Activated CD4-positive, alpha-beta memory T cell treated with anti-CD3 and anti-CD28 coated beads, Interleukin-2, amount 10 ng/mL, durations not matched to agents 7 days and 5 days (primary cell): ENCODE measurements at regions of chr2 and their contacts with region 1.

Region 1: DNA sequence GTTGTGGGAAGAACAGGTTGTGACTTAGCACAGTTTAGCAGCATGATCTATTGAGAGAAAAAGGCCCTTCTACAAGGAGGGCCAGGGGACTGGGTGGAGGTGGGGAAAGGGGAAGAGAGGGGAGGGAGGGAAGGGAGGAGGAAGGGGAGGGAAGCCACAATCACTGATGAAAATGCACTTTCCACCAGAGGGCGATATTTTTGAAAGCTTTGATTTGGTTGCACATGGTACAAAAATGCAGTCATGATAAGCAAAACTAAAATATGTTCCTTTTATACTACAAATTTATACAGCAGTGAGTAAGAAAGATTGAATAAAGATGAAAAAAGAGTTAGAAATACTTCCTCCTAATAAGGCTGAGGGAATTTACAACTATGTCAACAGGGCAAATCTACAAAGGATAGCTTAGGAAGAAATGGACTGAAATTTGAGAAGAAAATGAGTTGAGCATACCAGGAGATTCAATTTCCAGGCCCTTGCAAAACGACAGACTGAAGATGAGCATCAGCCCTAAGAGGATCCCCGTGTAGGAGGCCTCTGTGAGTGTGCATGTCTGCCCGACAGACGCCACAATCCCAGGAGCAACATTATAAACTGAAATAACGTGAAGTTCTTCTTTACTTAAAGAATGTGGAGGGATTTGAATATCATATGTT is 17.2 kb downstream of the SH3YL1 start:
- DNase-seq: no peak
- H3K4me3 Mint-ChIP-seq: no peak overlapping the region
- H3K27ac Mint-ChIP-seq: no peak overlapping the region
- H3K4me1 Mint-ChIP-seq: peaks cover 3% of the 10 kb centered on the region
- H3K27me3 Mint-ChIP-seq: no peaks in the 10 kb centered on the region

Region 2: GRCh38 chr2:636641-637405 is 390.2 kb after region 1 on chr2:
- CTCF ChIA-PET with region 1: interaction called, 23 read pairs
- POLR2A ChIA-PET with region 1: no interaction called
- DNase-seq: peak; percentile 46
- H3K4me3 Mint-ChIP-seq: peak overlapping the region; percentile 69
- H3K27ac Mint-ChIP-seq: no peak overlapping the region
- H3K4me1 Mint-ChIP-seq: peaks cover 4% of the 10 kb centered on the region
- H3K27me3 Mint-ChIP-seq: peaks cover 7% of the 10 kb centered on the region